GM13976 (cell line): ENCODE measurements at regions of chr10 and their contacts with region 1.

Region 1: GRCh38 chr10:70532554-70533188 is 54.1 kb downstream of the PALD1 start:
- DNase-seq: no peak
- CTCF ChIP-seq: no peak

Region 2: DNA sequence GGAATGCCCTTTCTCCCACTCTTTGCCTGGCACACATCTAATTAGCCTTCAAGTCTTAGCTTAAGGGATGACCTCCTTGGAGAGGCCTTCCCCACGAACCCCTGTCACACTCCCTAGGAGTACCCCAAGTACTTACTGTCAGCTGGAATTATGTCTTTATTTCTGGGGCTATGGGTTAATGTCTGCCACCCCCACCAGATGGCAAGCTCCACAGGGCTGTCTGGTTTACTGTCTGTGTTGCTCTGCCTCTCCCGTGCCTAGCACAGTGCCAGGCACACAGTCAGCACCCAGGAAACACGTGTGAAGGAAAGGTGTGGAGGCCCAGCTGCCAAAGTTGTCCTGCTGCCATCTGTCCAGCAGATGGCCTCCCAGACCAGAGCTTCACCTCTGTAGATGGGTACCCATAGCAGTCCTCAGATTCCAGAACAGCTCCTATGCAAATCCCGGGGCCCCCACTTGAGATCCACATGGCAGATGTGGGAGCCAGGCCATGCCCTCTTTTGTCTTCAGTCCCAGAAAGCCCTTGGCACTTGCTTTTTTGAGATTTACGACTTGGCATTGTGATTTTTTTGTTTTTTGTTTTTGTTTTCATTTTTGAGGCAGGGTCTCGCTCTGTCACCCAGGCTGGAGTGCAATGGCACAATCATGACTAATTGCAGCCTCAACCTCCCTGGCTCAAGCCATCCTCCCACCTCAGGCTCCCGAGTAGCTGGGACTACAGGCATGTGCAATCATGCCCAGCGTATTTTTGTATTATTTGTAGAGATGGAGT is 71.3 kb before region 1 on chr10:
- in situ Hi-C with region 1: loop called (anchors 5 kb)
- DNase-seq: peak; percentile 84
- CTCF ChIP-seq: peak; percentile 79